Activated CD4-positive, alpha-beta memory T cell treated with anti-CD3 and anti-CD28 coated beads, Interleukin-2, amount 10 ng/mL, durations not matched to agents 7 days and 5 days (primary cell): ENCODE measurements at regions of chr12 and their contacts with region 1.

Region 1: GRCh38 chr12:8078398-8078797 is 3.7 kb upstream of the NECAP1 start:
- DNase-seq: peak; percentile 65
- H3K4me3 Mint-ChIP-seq: no peak overlapping the region
- H3K27ac Mint-ChIP-seq: no peak overlapping the region
- H3K4me1 Mint-ChIP-seq: peaks cover 41% of the 10 kb centered on the region
- H3K27me3 Mint-ChIP-seq: no peaks in the 10 kb centered on the region

Region 2: GRCh38 chr12:7859552-7859951 is 218.8 kb before region 1 on chr12:
- CTCF ChIA-PET with region 1: interaction called, 15 read pairs
- POLR2A ChIA-PET with region 1: no interaction called
- DNase-seq: no peak
- H3K4me3 Mint-ChIP-seq: no peak overlapping the region
- H3K27ac Mint-ChIP-seq: no peak overlapping the region
- H3K4me1 Mint-ChIP-seq: peaks cover 11% of the 10 kb centered on the region
- H3K27me3 Mint-ChIP-seq: peaks cover 9% of the 10 kb centered on the region

Region 3: DNA sequence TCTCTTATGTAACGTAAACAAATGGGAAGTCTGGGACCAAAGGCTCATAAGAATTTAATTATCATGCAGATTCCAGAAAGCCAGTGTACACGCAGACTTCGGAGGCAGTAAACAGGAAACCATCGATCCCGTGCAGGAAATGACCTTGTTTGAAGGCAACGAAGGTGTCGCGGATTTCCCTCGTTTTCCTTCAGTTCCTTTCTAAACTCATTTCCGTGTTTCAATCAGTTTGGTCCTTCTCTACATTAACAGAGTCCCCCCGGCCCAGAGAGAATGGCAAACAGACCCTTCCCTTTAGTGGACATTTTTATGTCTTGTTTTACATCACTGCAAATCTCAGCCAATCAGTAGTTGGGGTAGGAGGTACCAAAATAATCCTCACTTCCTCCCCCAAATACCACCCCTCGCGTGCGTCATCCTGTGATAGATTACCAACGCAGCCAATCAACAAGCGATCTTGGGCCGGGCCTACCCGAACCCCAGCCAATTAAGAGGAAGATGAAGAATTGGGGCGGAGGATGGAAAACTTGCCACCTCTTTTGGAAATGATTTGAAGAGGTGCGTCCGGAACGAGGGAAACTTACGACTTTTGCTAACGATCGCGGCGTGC is 52.0 kb before region 1 on chr12:
- CTCF ChIA-PET with region 1: interaction called, 13 read pairs
- POLR2A ChIA-PET with region 1: interaction called, 15 read pairs
- DNase-seq: peak; percentile 98
- H3K4me3 Mint-ChIP-seq: peak overlapping the region; percentile 88
- H3K27ac Mint-ChIP-seq: peak overlapping the region; percentile 99
- H3K4me1 Mint-ChIP-seq: peaks cover 17% of the 10 kb centered on the region
- H3K27me3 Mint-ChIP-seq: no peaks in the 10 kb centered on the region

Region 4: GRCh38 chr12:8032242-8033152 is 45.9 kb before region 1 on chr12 and contains the start of gene FOXJ2:
- CTCF ChIA-PET with region 1: interaction called, 15 read pairs
- POLR2A ChIA-PET with region 1: interaction called, 15 read pairs
- DNase-seq: peak; percentile 82
- H3K4me3 Mint-ChIP-seq: peak within 1 kb of the TSS; percentile 84
- H3K27ac Mint-ChIP-seq: peak within 1 kb of the TSS; percentile 44
- H3K4me1 Mint-ChIP-seq: peaks cover 53% of the 10 kb centered on the region
- H3K27me3 Mint-ChIP-seq: no peaks in the 10 kb centered on the region
- total RNA-seq, gene FOXJ2: 19.6 to 20.4 TPM

Region 5: DNA sequence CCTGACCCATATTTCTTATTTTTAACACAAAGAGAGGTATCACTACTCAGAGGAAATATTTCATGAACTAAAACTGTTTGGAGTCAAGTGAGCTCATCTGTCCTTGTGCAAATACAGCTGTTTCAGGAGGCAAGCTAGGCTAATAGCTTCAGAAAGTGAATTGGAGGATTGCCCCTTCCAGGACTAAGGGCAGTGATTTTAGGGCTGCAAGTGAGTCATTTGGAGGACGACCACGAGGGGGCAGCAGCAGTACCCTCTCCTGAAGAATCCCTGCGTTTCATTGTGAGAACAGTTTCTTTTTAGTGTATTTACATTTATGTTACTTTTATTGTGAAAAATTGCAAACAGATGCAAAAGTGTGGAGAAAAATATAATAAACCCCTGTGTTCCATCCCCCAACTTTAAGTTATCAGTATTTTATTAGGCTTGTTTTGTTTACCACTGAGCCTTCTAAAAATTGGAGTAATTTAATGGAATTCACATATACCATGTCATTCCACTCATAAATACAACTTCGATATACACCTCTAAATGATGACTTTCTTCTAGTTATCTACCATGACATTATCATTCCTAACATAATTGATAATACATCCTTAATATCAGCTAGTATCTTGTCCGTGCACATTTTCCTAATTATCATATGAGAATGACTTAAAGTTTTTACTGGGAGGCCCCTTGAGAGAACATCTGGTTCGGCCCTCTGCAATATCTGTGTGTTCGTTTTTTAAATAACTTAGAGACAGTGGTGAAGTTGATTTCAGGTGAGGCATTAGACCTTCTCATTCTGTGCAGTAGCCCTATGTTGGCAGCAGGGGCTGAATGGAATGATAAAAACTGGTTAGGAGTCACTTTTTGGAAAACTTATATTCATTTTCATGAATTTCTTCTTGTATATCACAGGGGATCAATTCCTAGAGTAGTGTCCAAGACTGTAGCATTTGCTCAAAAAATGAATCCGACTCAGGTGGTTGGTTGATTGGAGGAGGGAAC is 32.1 kb before region 1 on chr12:
- CTCF ChIA-PET with region 1: interaction called, 105 read pairs
- POLR2A ChIA-PET with region 1: interaction called, 5 read pairs
- DNase-seq: peak; percentile 85
- H3K4me3 Mint-ChIP-seq: no peak overlapping the region
- H3K27ac Mint-ChIP-seq: no peak overlapping the region
- H3K4me1 Mint-ChIP-seq: peaks cover 29% of the 10 kb centered on the region
- H3K27me3 Mint-ChIP-seq: no peaks in the 10 kb centered on the region

Region 6: DNA sequence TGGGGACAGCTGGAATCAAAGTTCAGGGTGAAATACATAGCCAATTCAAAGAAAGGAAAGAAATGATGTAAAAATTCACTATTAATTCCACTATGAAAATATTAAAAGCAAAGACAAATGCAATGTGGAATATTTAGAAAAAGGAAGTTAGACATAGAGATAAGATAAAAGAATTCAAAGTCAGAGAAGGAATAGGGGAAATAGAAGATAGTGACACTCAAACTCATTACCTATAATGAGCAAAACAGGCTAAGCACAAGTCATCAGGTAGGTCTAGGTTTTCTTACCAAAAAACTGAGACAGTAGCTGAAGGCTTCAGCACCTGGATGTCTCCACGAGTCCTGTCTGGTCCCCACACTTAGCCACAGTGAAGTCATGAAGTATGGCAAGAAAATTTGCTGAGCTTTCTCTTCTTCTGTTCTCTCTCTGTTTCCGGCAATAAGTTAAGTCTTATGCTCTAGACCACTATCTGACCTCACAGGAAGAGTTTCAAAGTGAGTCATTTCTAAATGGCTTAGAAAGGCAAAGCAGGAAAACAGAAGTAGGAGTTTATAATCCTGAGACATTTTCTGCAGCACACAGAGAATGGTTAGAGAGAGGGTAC is 12.3 kb before region 1 on chr12 and contains the start of gene C3AR1:
- CTCF ChIA-PET with region 1: interaction called, 37 read pairs
- POLR2A ChIA-PET with region 1: interaction called, 20 read pairs
- DNase-seq: peak; percentile 60
- H3K4me3 Mint-ChIP-seq: peak within 1 kb of the TSS; percentile 60
- H3K27ac Mint-ChIP-seq: peak within 1 kb of the TSS; percentile 88
- H3K4me1 Mint-ChIP-seq: peaks cover 52% of the 10 kb centered on the region
- H3K27me3 Mint-ChIP-seq: no peaks in the 10 kb centered on the region
- total RNA-seq, gene C3AR1: 11.4 to 12.2 TPM

Region 7: DNA sequence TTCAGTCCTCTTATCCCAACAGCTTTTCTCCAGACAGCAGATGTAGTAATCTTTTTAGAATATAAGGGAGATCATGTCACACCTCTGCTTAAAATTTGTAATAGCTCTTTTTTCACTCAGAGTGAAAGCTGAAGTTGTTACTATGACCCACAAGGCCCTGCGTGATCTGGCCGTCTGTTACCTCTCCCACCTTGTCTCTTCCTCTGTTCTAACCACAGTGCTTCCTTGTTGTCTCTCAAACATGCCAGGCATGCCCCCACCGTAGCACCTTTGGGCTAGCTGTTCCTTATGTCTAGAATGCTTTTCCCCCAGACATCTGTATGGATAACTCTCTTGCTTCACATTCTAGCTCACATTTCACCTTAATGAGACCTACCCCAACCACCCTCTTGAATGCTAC is 10.2 kb after region 1 on chr12:
- CTCF ChIA-PET with region 1: interaction called, 16 read pairs
- POLR2A ChIA-PET with region 1: interaction called, 5 read pairs
- DNase-seq: peak; percentile 55
- H3K4me3 Mint-ChIP-seq: peak overlapping the region; percentile 70
- H3K27ac Mint-ChIP-seq: peak overlapping the region; percentile 87
- H3K4me1 Mint-ChIP-seq: peaks cover 50% of the 10 kb centered on the region
- H3K27me3 Mint-ChIP-seq: no peaks in the 10 kb centered on the region